ENCODE measurements at regions of chr10 and their contacts with region 1.

Region 1: GRCh38 chr10:13722747-13723657 is 136.2 kb downstream of the PRPF18 start:
- DNase-seq: no peak
- H3K4me3 ChIP-seq: no peak overlapping the region
- H3K4me3 Mint-ChIP-seq: no peak overlapping the region
- H3K27ac ChIP-seq: no peak overlapping the region
- H3K27ac Mint-ChIP-seq: no peak overlapping the region
- H3K4me1 ChIP-seq: peaks cover 6% of the 10 kb centered on the region
- H3K4me1 Mint-ChIP-seq: peaks cover 2 to 10% (median 9%) of the 10 kb centered on the region in 3 donors
- H3K27me3 ChIP-seq: no peaks in the 10 kb centered on the region
- H3K27me3 Mint-ChIP-seq: peaks cover 6 to 23% of the 10 kb centered on the region in 2 donors

Region 2: GRCh38 chr10:13758312-13758711 is 35.3 kb after region 1 on chr10:
- CTCF ChIA-PET with region 1: no interaction called
- POLR2A ChIA-PET with region 1: no interaction called
- DNase-seq: no peak
- H3K4me3 ChIP-seq: no peak overlapping the region
- H3K4me3 Mint-ChIP-seq: no peak overlapping the region
- H3K27ac ChIP-seq: no peak overlapping the region
- H3K27ac Mint-ChIP-seq: peak overlapping the region in 1 of 8 donors; percentile 82
- H3K4me1 ChIP-seq: no peaks in the 10 kb centered on the region
- H3K4me1 Mint-ChIP-seq: peaks cover 0 to 2% (median 0%) of the 10 kb centered on the region in 3 donors
- H3K27me3 ChIP-seq: no peaks in the 10 kb centered on the region
- H3K27me3 Mint-ChIP-seq: peaks cover 0 to 3% of the 10 kb centered on the region in 2 donors

Region 3: GRCh38 chr10:13831711-13832141 is 108.7 kb after region 1 on chr10:
- CTCF ChIA-PET with region 1: no interaction called
- POLR2A ChIA-PET with region 1: no interaction called
- DNase-seq: no peak
- H3K4me3 ChIP-seq: no peak overlapping the region
- H3K4me3 Mint-ChIP-seq: no peak overlapping the region
- H3K27ac ChIP-seq: no peak overlapping the region
- H3K27ac Mint-ChIP-seq: peak overlapping the region in 1 of 8 donors; percentile 44
- H3K4me1 ChIP-seq: no peaks in the 10 kb centered on the region
- H3K4me1 Mint-ChIP-seq: peaks cover 0 to 8% (median 0%) of the 10 kb centered on the region in 3 donors
- H3K27me3 ChIP-seq: no peaks in the 10 kb centered on the region
- H3K27me3 Mint-ChIP-seq: peaks cover 0 to 2% of the 10 kb centered on the region in 2 donors

Region 4: GRCh38 chr10:13924040-13924725 is 201.2 kb after region 1 on chr10:
- CTCF ChIA-PET with region 1: no interaction called
- POLR2A ChIA-PET with region 1: no interaction called
- DNase-seq: no peak
- H3K4me3 ChIP-seq: no peak overlapping the region
- H3K4me3 Mint-ChIP-seq: no peak overlapping the region
- H3K27ac ChIP-seq: no peak overlapping the region
- H3K27ac Mint-ChIP-seq: no peak overlapping the region
- H3K4me1 ChIP-seq: no peaks in the 10 kb centered on the region
- H3K4me1 Mint-ChIP-seq: peaks cover 4 to 6% (median 4%) of the 10 kb centered on the region in 3 donors
- H3K27me3 ChIP-seq: no peaks in the 10 kb centered on the region
- H3K27me3 Mint-ChIP-seq: peaks cover 1 to 7% of the 10 kb centered on the region in 2 donors

Region 5: DNA sequence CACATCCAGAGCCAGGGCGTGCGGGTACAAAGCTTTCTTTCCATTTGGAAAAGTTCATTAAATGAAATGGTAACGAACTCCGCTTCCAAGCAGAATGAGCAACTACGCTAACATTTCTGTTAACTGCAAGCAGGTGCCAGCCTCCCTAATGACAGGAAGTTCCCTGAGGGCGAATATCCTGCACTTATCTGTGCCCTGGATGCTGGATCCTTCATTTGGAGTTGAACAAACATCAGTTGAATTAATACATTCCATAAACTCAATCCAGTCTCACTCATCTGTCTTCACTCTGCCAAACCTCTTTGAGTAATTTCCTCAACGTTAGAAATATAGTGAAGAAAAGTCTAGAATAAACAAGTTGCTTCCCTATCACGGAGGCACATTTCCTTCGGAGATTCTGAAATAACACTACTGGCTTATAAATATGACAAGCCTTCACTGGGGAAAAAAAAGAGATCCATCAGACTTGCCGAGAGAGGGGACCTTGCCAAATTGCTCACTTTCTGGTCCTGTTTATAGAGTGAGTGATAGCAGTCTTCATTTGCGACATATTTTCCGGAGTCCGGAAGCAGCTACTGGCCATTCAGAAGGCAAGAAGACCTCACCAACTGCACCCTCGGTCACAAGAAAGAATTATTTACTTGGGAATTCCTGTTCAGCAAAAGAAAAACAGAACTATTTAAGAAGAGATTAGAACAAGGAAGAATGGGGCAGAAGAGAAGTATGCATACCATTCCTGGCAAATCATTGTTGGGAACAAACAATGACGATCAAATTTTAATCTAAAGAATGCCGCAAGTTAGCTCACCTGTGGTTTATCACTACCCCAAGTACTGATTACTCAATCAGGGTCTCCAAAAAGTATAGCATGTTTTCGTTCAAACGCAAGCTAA is 855.3 kb after region 1 on chr10:
- CTCF ChIA-PET with region 1: no interaction called
- POLR2A ChIA-PET with region 1: no interaction called
- DNase-seq: no peak
- H3K4me3 ChIP-seq: no peak overlapping the region
- H3K4me3 Mint-ChIP-seq: no peak overlapping the region
- H3K27ac ChIP-seq: no peak overlapping the region
- H3K27ac Mint-ChIP-seq: peak overlapping the region; percentile 15 to 96 (median 60)
- H3K4me1 ChIP-seq: peaks cover 72% of the 10 kb centered on the region
- H3K4me1 Mint-ChIP-seq: peaks cover 62 to 96% (median 93%) of the 10 kb centered on the region in 3 donors
- H3K27me3 ChIP-seq: no peaks in the 10 kb centered on the region
- H3K27me3 Mint-ChIP-seq: no peaks in the 10 kb centered on the region

Region 6: GRCh38 chr10:15113766-15114165 is 1390.8 kb after region 1 on chr10:
- CTCF ChIA-PET with region 1: no interaction called
- POLR2A ChIA-PET with region 1: interaction called, 11 read pairs
- DNase-seq: no peak
- H3K4me3 ChIP-seq: no peak overlapping the region
- H3K4me3 Mint-ChIP-seq: no peak overlapping the region
- H3K27ac ChIP-seq: no peak overlapping the region
- H3K27ac Mint-ChIP-seq: no peak overlapping the region
- H3K4me1 ChIP-seq: no peaks in the 10 kb centered on the region
- H3K4me1 Mint-ChIP-seq: peaks cover 0 to 7% (median 1%) of the 10 kb centered on the region in 3 donors
- H3K27me3 ChIP-seq: no peaks in the 10 kb centered on the region
- H3K27me3 Mint-ChIP-seq: no peaks in the 10 kb centered on the region